Dendritic cell treated with granulocyte-macrophage colony-stimulating factor and Interleukin-4, amounts not matched to agents 40 ng/mL and 50 ng/mL, for 4 days (primary cell): ENCODE measurements at regions of chr15 and their contacts with region 1.

Region 1: GRCh38 chr15:44426975-44427755 is at the start of gene CTDSPL2:
- H3K4me3 Mint-ChIP-seq: peak within 1 kb of the TSS; percentile 91
- H3K27ac Mint-ChIP-seq: peak within 1 kb of the TSS; percentile 100
- H3K4me1 Mint-ChIP-seq: peaks cover 26% of the 10 kb centered on the region
- H3K27me3 Mint-ChIP-seq: no peaks in the 10 kb centered on the region

Region 2: DNA sequence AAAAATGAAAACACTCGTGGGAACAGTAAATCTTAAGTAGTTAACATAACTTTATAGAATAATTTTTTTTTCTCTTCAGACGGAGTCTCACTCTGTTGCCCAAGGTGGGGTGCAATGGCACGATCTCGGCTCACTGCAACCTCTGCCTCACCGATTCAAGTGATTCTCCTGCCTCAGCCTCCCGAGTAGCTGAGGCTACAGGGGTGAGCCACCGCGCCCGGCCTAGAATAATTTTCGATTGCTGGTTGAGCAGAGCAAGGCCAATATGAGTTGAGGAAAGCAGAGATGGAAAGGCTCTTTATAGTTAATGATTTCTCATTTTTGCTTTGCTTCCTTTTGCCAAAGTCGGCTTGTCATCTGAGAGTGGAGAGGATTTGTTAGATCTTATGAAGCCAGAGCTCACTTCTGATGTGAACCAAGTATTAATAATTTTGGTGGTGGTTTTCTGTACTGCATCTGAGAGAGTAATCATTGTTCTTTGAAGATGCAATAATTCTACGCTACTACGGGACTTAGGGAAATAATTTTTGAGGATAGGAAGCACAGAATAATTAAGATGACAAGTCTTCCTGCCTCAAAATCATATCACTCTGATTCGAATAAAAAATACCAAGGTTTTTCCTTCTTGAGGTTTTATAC is 140.2 kb before region 1 on chr15:
- intact Hi-C with region 1: loop called (anchors 1 kb)
- H3K4me3 Mint-ChIP-seq: peak overlapping the region; percentile 99
- H3K27ac Mint-ChIP-seq: peak overlapping the region; percentile 99
- H3K4me1 Mint-ChIP-seq: peaks cover 24% of the 10 kb centered on the region
- H3K27me3 Mint-ChIP-seq: no peaks in the 10 kb centered on the region

Region 3: DNA sequence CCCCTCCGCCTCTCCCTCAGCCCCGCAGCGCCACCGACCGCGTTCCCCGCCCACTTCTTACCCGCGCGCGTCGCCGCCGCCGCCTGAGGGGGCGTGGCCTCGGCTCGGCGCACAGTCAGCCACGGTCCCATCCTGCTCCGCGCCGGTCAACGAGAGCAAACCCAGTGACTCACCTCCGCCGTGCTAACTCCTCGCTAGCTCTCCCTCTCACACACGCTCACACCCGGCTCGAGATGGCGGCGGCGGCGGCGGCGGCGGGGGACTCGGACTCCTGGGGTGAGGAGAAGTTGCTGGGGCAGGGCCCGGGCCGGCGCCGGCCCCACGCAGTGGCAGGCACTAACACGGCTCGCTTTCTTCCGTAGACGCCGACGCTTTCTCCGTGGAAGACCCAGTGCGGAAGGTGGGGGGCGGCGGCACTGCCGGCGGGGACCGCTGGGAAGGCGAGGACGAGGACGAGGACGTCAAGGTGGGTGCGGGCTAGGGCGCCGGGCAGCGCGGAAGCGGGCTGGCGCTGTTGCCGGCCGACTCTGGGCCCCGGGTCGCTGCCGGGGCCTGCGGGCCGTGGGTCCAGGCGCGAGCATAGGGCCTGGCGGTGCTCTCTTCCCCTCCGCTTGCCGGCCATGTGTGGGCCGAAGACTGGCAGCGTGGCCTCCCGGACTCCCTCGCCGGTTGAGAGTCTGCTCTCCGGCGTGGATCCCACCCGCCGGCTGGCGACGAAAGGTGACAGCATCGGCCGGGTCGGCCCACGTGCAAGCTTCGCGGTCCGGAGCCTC is 110.0 kb after region 1 on chr15 and contains the start of gene EIF3J:
- intact Hi-C with region 1: loop called (anchors 10 kb)
- H3K4me3 Mint-ChIP-seq: peak within 1 kb of the TSS; percentile 87
- H3K27ac Mint-ChIP-seq: peak within 1 kb of the TSS; percentile 97
- H3K4me1 Mint-ChIP-seq: peaks cover 48% of the 10 kb centered on the region
- H3K27me3 Mint-ChIP-seq: no peaks in the 10 kb centered on the region